GM12878 (cell line): ENCODE measurements at regions of chr14 and their contacts with region 1.

Region 1: DNA sequence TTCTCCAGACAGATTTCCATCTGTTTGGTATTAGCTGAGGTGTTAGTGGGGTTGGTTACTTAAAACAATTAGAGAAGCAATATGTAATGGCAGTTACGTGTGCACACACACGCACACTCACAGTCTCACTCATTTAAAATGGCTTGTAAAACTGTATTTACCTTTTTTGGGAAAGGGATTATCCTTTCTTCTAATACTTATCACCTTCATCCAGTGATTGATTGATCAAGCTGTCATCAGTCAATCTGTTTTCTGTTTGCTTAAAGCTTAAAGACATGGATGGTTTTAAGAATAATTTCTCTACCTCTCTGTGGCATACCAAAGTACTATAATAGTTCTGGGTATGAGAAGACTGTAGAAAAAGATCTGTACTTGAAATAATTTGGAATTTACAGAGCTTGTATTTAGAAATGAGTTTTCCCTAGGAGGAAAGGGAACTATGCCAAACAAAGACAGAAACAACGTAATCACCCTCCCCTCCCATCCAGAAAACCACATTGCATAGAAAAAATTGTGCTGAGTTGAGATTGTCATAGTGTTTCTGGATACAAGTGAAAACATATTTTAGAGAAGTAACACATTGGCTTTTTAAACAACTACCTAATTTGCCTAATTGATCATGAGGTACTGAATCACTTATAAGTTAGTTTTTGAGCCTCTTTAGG is 455.8 kb downstream of the PCNX1 start:
- DNase-seq: peak; percentile 53
- ATAC-seq: peak; percentile 73
- H3K4me3 ChIP-seq: no peak overlapping the region
- H3K27ac ChIP-seq: peak overlapping the region; percentile 47; the same call in 1 of the 2 replicates
- H3K4me1 ChIP-seq: peaks cover 49% of the 10 kb centered on the region
- H3K27me3 ChIP-seq: no peaks in the 10 kb centered on the region
- CTCF ChIP-seq: no peak
- EP300 ChIP-seq: peak; percentile 33 to 51; a peak in 1 of 4 replicates
- POLR2A ChIP-seq: no peak
- RAD21 ChIP-seq: no peak

Region 2: GRCh38 chr14:71242237-71242748 is 120.8 kb before region 1 on chr14:
- CTCF ChIA-PET with region 1: no interaction called
- POLR2A ChIA-PET with region 1: no interaction called
- RAD21 ChIA-PET with region 1: no interaction called
- SMC1A ChIA-PET with region 1: no interaction called
- in situ Hi-C with region 1: no loop called
- intact Hi-C with region 1: no loop called
- DNase-seq: no peak
- ATAC-seq: no peak
- H3K4me3 ChIP-seq: no peak overlapping the region
- H3K27ac ChIP-seq: no peak overlapping the region
- H3K4me1 ChIP-seq: no peaks in the 10 kb centered on the region; the same call in 1 of the 2 replicates
- H3K27me3 ChIP-seq: no peaks in the 10 kb centered on the region
- CTCF ChIP-seq: no peak
- EP300 ChIP-seq: no peak
- POLR2A ChIP-seq: no peak
- RAD21 ChIP-seq: no peak

Region 3: GRCh38 chr14:71300566-71301330 is 62.3 kb before region 1 on chr14:
- CTCF ChIA-PET with region 1: no interaction called
- POLR2A ChIA-PET with region 1: no interaction called
- RAD21 ChIA-PET with region 1: no interaction called
- SMC1A ChIA-PET with region 1: no interaction called
- in situ Hi-C with region 1: no loop called
- intact Hi-C with region 1: no loop called
- DNase-seq: no peak
- ATAC-seq: no peak
- H3K4me3 ChIP-seq: no peak overlapping the region
- H3K27ac ChIP-seq: no peak overlapping the region
- H3K4me1 ChIP-seq: no peaks in the 10 kb centered on the region
- H3K27me3 ChIP-seq: no peaks in the 10 kb centered on the region
- CTCF ChIP-seq: no peak
- EP300 ChIP-seq: no peak
- POLR2A ChIP-seq: no peak
- RAD21 ChIP-seq: no peak

Region 4: GRCh38 chr14:71348394-71348793 is 14.7 kb before region 1 on chr14:
- CTCF ChIA-PET with region 1: interaction called, 4 read pairs
- POLR2A ChIA-PET with region 1: interaction called, 3 read pairs
- RAD21 ChIA-PET with region 1: interaction called, 4 read pairs
- SMC1A ChIA-PET with region 1: interaction called, 12 read pairs
- in situ Hi-C with region 1: no loop called
- intact Hi-C with region 1: no loop called
- DNase-seq: no peak
- ATAC-seq: peak; percentile 74
- H3K4me3 ChIP-seq: no peak overlapping the region
- H3K27ac ChIP-seq: peak overlapping the region; percentile 35
- H3K4me1 ChIP-seq: peaks cover 17% of the 10 kb centered on the region
- H3K27me3 ChIP-seq: no peaks in the 10 kb centered on the region
- CTCF ChIP-seq: no peak
- EP300 ChIP-seq: peak in 1 of 2 experiments; percentile 27; a peak in 1 of 4 replicates
- POLR2A ChIP-seq: no peak
- RAD21 ChIP-seq: no peak

Region 5: GRCh38 chr14:71395151-71395604 is 32.1 kb after region 1 on chr14:
- CTCF ChIA-PET with region 1: interaction called, 3 read pairs
- POLR2A ChIA-PET with region 1: interaction called, 3 read pairs
- RAD21 ChIA-PET with region 1: interaction called, 18 read pairs
- SMC1A ChIA-PET with region 1: interaction called, 24 read pairs
- in situ Hi-C with region 1: no loop called
- intact Hi-C with region 1: loop called (anchors 5 kb)
- DNase-seq: no peak
- ATAC-seq: peak; percentile 19
- H3K4me3 ChIP-seq: no peak overlapping the region
- H3K27ac ChIP-seq: no peak overlapping the region
- H3K4me1 ChIP-seq: peaks cover 18% of the 10 kb centered on the region
- H3K27me3 ChIP-seq: no peaks in the 10 kb centered on the region
- CTCF ChIP-seq: no peak
- EP300 ChIP-seq: no peak
- POLR2A ChIP-seq: no peak
- RAD21 ChIP-seq: no peak